ENCODE measurements at regions of chr13 and their contacts with region 1.

Region 1: GRCh38 chr13:97221989-97222700 is at the start of gene MBNL2:
- DNase-seq: peak; percentile 90
- ATAC-seq: peak; percentile 96
- H3K4me3 ChIP-seq: peak within 1 kb of the TSS; percentile 78 to 95 (median 82)
- H3K27ac ChIP-seq: peak within 1 kb of the TSS; percentile 92
- H3K4me1 ChIP-seq: peaks cover 51% of the 10 kb centered on the region
- H3K27me3 ChIP-seq: no peaks in the 10 kb centered on the region; a peak in 1 of 5 replicates
- CTCF ChIP-seq: no peak
- EP300 ChIP-seq: peak in 1 of 2 experiments; percentile 37; a peak in 1 of 4 replicates
- POLR2A ChIP-seq: peak; percentile 71 to 87; a peak in 3 of 4 replicates
- RAD21 ChIP-seq: no peak
- total RNA-seq, gene MBNL2: 30.8 and 48.1 TPM in 2 replicates

Region 2: DNA sequence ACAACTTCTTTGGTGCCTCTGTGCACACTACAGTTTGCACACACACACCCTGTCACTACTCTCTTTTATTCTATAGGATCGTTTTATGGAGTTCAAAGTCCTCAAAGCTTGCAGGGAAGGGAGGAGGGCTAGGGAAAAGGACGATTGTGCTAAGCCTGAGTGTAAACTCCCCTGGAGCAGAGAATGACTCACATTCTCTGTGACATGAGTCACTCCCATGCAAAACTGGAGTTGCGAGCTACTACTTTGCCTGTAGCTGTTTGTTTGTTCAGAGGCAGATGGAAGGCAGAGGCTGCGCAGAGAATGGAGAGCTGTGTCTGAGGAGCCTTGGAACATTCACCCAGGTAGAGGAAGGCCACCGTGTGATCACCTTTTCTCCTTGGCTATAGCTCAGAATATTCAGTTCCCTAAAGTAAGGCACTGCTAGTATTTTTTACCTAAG is 80.6 kb before region 1 on chr13:
- CTCF ChIA-PET with region 1: no interaction called
- POLR2A ChIA-PET with region 1: interaction called, 28 read pairs
- in situ Hi-C with region 1: no loop called
- intact Hi-C with region 1: no loop called
- DNase-seq: peak; percentile 96
- ATAC-seq: peak; percentile 100
- H3K4me3 ChIP-seq: peak overlapping the region; percentile 41 to 61 (median 52); a peak in 3 of 6 replicates
- H3K27ac ChIP-seq: peak overlapping the region; percentile 3
- H3K4me1 ChIP-seq: peaks cover 32% of the 10 kb centered on the region
- H3K27me3 ChIP-seq: no peaks in the 10 kb centered on the region
- CTCF ChIP-seq: 0 out of 2 replicates have a peak, but pooled peaks have one; percentile 3
- EP300 ChIP-seq: peak in 1 of 2 experiments; percentile 71; a peak in 2 of 4 replicates
- POLR2A ChIP-seq: no peak
- RAD21 ChIP-seq: no peak

Region 3: GRCh38 chr13:97242755-97243497 is 20.8 kb after region 1 on chr13:
- CTCF ChIA-PET with region 1: no interaction called
- POLR2A ChIA-PET with region 1: interaction called, 15 read pairs
- in situ Hi-C with region 1: no loop called
- intact Hi-C with region 1: loop called (anchors 2 kb)
- DNase-seq: no peak
- ATAC-seq: peak; percentile 23; the same call in 2 of the 3 replicates
- H3K4me3 ChIP-seq: peak overlapping the region in 1 of 3 experiments; percentile 45; a peak in 2 of 6 replicates
- H3K27ac ChIP-seq: peak overlapping the region; percentile 79
- H3K4me1 ChIP-seq: peaks cover 98% of the 10 kb centered on the region
- H3K27me3 ChIP-seq: no peaks in the 10 kb centered on the region
- CTCF ChIP-seq: no peak
- EP300 ChIP-seq: no peak
- POLR2A ChIP-seq: no peak
- RAD21 ChIP-seq: no peak

Region 4: DNA sequence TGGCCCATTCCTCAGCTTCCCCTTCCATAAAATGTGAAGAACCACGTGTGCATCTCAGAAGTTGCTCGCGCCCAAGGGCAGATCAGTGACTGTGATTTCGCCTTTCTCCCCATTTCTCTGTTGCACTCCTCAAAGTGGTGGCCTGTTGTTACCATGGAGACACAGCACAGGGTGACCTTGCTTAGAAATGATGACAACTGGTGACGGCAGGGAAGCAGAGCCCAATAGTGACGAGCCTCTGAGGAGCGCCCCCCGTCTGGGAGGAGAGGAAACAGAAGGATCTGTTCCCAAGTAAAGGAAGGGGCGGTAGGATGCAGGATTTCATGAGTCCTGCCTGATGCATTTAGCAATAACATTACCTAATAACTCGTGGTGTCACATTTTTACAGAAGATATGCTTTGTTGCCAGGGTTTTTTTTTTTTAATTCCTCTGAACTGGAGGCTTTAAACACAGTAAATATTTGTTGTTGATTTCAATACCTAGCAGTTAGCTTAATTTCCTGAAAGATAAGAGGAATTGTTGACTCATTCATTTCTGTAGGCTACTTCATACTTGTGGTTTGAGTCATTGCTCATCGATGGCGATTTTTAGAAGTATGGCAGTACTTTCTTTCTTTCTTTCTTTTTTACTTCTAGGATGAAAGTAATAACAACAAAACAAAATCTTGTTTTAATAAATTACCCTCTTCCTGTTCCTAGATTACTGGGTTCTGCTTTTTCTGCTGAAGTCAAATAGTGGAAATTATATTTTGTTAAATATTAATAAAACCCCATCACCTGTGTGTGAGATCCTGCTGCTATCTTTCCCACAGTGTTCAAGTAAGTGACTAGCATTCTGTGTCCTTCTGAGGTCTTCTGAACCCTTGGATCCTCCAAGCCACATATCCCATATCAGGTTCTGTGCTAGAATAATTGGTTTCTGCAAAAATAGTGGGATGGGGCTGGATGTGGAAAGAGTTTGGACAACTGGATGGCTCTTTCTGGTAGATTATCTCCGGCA is 36.0 kb after region 1 on chr13:
- CTCF ChIA-PET with region 1: interaction called, 3 read pairs
- POLR2A ChIA-PET with region 1: interaction called, 25 read pairs
- in situ Hi-C with region 1: no loop called
- intact Hi-C with region 1: loop called (anchors 1 kb)
- DNase-seq: peak; percentile 87
- ATAC-seq: peak; percentile 73
- H3K4me3 ChIP-seq: peak overlapping the region in 1 of 3 experiments; percentile 32; a peak in 1 of 6 replicates
- H3K27ac ChIP-seq: peak overlapping the region; percentile 92
- H3K4me1 ChIP-seq: peaks cover 86% of the 10 kb centered on the region
- H3K27me3 ChIP-seq: no peaks in the 10 kb centered on the region
- CTCF ChIP-seq: peak; percentile 61
- EP300 ChIP-seq: peak; percentile 68 to 91
- POLR2A ChIP-seq: no peak
- RAD21 ChIP-seq: no peak

Region 5: DNA sequence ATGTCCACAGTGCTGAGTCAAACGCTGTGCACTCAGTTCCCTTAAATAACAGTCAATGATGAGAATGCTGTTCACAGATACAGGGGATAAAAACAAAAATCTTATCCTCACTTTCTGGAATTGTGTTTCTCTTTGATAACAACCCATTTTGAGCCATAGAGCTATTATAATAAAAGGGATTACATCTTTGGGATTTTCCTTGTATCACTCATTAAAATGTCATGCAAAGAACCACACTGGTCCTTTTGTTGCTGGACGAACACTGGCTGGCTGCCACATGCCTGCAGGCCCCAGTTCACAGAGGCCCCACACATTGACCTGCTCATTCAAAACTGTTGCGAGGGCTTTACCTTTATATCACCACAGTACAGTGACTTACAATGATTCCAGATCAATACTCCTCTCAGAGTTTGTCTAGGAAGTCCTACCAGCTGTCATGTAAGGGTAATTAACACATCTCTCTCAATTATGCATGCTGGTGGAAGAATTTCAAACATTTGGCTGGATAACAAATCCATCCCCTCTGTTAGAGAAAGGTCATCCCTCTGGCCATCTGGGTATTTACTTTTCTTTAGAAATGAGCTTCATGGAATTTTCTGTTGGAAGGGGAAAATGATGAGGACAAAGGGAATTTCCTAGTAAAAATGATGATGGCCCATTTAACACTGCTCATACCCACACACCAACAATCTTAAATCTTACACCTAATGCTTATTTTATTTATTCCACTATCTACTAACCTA is 85.9 kb after region 1 on chr13:
- CTCF ChIA-PET with region 1: no interaction called
- POLR2A ChIA-PET with region 1: interaction called, 5 read pairs
- in situ Hi-C with region 1: no loop called
- intact Hi-C with region 1: loop called (anchors 1 kb)
- DNase-seq: peak; percentile 81
- ATAC-seq: peak; percentile 89
- H3K4me3 ChIP-seq: peak overlapping the region in 1 of 3 experiments; percentile 30; a peak in 1 of 6 replicates
- H3K27ac ChIP-seq: peak overlapping the region; percentile 78
- H3K4me1 ChIP-seq: peaks cover 80% of the 10 kb centered on the region
- H3K27me3 ChIP-seq: no peaks in the 10 kb centered on the region
- CTCF ChIP-seq: no peak
- EP300 ChIP-seq: peak in 1 of 2 experiments; percentile 56; a peak in 1 of 4 replicates
- POLR2A ChIP-seq: no peak
- RAD21 ChIP-seq: no peak

Region 6: GRCh38 chr13:97432917-97433726 is 211.0 kb after region 1 on chr13:
- CTCF ChIA-PET with region 1: no interaction called
- POLR2A ChIA-PET with region 1: interaction called, 6 read pairs
- in situ Hi-C with region 1: no loop called
- intact Hi-C with region 1: loop called (anchors 10 kb)
- DNase-seq: peak; percentile 99
- ATAC-seq: peak; percentile 93
- H3K4me3 ChIP-seq: peak overlapping the region; percentile 77 to 86 (median 81)
- H3K27ac ChIP-seq: peak overlapping the region; percentile 96
- H3K4me1 ChIP-seq: peaks cover 50% of the 10 kb centered on the region
- H3K27me3 ChIP-seq: no peaks in the 10 kb centered on the region
- CTCF ChIP-seq: peak; percentile 26
- EP300 ChIP-seq: peak in 1 of 2 experiments; percentile 93; a peak in 2 of 4 replicates
- POLR2A ChIP-seq: peak; percentile 58 to 65
- RAD21 ChIP-seq: no peak